Left lung (tissue), 14 donors: ENCODE measurements at regions of chr15 and their contacts with region 1.

Region 1: DNA sequence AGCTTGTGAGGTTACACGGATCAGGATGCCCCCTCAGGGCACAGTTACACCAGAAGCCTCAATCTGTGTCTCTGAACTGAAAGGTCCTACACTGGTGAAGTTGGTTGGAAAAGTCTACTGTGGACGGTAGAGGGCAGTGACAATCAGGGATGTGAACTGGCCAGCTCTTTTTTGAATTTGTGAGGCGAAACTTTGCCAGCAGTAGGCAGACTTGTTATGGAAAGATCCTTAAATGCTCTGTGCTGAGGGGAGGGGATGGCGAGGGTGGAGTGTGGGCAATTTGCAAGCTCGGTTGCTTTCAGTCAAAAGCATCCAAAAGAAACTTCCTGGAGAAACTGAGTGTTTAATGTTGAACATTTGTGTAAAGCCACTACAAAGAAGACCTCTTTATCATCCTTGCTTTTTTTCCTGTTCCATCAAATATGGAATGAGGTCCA is 127.4 kb upstream of the ABHD17C start:
- DNase-seq: peak in 2 of 4 donors; percentile 57 to 83
- ATAC-seq: peak; percentile 92
- H3K4me3 ChIP-seq: no peak overlapping the region
- H3K27ac ChIP-seq: no peak overlapping the region
- H3K4me1 ChIP-seq: peaks cover 7% of the 10 kb centered on the region in 2 donors
- H3K27me3 ChIP-seq: no peaks in the 10 kb centered on the region
- CTCF ChIP-seq: peak; percentile 57 to 69

Region 2: DNA sequence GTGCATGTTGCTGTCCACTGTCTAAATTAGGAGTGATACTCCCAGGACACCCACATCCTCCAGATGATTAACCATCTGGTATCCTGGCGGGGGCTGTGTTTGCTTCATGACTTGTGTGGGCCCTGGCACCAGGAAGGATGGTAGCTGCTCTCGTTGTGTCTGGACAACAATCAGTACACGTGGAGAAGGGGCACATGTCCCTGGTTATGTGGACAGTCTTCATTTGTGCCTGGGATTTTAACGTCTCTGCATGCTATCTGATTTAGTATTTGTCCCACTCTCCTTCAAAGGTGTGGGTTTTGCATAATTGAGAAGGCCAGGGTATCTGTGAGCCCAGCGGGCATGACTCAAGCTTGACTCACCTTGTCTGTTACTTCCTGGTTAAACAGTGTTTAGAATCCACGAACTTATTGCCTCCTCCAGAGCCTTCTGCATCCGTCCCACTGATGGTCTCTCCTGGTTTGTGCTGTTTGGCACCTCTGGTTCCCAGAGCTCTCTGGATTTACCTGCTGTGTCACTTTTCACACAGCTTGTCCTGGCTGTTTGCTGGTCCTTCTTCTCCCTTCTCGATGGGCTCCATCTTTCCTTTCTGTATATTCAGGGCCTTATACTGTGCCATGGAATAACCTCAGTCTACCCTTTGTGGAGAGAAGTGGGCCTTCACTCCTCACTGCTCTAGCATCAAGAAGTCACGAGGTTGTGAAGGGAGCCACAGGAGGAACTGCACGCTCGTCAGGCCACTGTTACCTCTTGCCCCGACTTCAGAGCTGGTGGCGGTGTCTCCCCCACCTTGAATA is 131.0 kb before region 1 on chr15:
- intact Hi-C with region 1: no loop called
- DNase-seq: no peak
- ATAC-seq: peak; percentile 71
- H3K4me3 ChIP-seq: no peak overlapping the region
- H3K27ac ChIP-seq: no peak overlapping the region
- H3K4me1 ChIP-seq: peaks cover 0 to 9% of the 10 kb centered on the region in 2 donors
- H3K27me3 ChIP-seq: peaks cover 0 to 3% of the 10 kb centered on the region in 2 donors
- CTCF ChIP-seq: no peak

Region 3: DNA sequence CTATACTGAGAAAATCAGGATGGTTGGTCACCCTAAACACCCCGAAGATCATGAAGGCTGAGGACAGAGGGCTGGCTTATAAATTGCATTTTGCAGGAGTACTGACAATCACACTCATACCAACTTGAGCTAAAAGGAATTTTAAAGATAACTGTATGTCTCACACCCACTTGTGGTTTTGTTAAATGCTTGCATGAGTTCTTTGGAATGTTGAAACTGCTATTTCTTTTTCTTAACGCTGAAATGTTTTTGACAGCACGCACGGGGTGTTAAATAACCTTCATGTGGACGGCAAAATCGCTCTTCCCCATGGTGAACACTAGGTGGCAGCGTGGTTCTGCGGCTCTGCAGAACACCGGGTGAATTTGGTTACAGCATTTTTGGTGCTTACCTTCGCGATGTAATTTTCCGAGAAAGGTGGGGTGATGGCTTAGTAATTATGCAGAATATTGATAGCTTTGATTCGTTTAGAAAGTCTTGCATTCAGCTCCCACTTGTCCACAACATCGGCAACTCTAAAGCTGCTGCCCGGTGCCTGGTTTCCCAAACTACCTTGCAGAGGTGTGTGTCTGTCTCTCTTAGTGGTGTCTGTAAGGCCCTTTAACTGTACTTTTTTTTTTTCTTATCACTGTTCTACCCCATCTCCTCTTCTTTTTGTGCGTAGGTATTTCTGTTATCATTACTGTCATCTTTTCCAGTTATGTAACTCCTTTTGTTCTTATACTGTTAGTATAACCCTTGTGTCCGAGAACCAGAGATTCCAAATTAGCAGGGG is 111.9 kb before region 1 on chr15:
- intact Hi-C with region 1: loop called in 1 of 2 experiments (anchors 10 kb)
- DNase-seq: peak in 3 of 4 donors; percentile 53 to 84 (median 72)
- ATAC-seq: peak; percentile 93
- H3K4me3 ChIP-seq: no peak overlapping the region
- H3K27ac ChIP-seq: no peak overlapping the region
- H3K4me1 ChIP-seq: peaks cover 9 to 27% of the 10 kb centered on the region in 2 donors
- H3K27me3 ChIP-seq: peaks cover 0 to 8% of the 10 kb centered on the region in 2 donors
- CTCF ChIP-seq: peak; percentile 86 to 88

Region 4: DNA sequence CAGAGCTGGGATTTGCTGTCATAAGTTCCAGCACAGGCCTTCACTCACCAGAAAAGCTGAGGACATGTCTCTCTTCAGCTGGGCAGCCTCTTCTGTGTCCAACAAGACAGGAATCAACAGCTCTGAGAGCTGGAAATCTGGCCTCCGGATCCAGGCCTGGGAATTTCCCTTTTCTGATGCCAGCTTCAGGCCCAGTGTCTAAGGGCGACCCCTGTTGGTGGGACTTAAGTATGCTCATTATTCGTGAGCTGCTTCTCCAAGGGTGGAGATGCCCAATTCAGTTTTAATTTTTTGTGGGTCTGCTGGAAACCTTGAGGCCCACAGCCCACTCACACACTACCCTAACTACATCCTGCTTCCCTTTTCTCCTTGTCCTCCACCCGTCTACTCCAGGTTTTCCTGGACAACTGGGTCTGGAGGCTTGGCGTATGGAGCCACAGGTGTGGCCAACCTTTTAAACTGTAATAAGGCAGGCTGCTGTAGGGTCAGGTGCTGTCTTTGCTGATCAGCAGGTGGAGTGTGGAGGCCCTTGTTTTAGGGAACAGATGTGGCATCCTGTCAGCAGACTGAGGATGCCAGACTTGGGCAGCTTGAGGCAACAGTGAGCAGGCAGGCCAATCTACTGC is 208.8 kb after region 1 on chr15:
- intact Hi-C with region 1: loop called in 1 of 2 experiments (anchors 5 kb)
- DNase-seq: peak in 3 of 4 donors; percentile 65 to 87 (median 73)
- ATAC-seq: peak; percentile 63
- H3K4me3 ChIP-seq: no peak overlapping the region
- H3K27ac ChIP-seq: peak overlapping the region; percentile 33 to 75
- H3K4me1 ChIP-seq: peaks cover 19 to 46% of the 10 kb centered on the region in 2 donors
- H3K27me3 ChIP-seq: peaks cover 12 to 45% of the 10 kb centered on the region in 2 donors
- CTCF ChIP-seq: peak; percentile 67 to 83

Region 5: DNA sequence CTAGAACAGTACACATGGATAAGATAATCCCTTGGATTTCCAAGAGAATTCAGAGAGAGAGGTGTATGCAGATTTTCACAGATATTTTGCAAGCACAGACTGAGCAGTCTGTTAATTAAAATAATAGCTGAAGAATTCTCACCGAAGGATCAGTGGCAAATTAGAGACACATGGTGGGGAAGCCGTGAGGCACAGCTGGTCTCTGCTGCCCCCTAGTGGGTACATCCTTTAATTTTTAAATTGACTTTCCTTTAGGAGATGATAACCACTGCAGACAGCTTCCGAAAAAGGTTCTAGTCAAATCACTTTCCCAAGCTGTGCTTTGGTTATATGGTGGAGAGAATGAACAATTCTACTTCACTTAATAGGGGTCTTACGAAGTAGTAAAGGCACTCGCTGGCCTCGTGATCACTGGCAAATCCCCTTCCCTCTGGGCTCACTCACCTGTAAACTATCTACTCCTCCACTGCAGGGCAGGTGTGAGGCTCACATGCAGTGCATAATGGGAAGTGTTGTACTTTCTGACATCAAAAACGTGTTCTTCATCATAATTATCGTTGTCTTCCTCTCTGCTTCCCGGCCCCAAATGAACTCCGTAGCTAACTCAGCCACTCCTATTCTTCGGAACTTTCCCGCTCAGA is 402.4 kb after region 1 on chr15:
- intact Hi-C with region 1: loop called in 1 of 2 experiments (anchors 5 kb)
- DNase-seq: peak in 2 of 4 donors; percentile 53 to 74
- ATAC-seq: peak; percentile 94
- H3K4me3 ChIP-seq: no peak overlapping the region
- H3K27ac ChIP-seq: no peak overlapping the region
- H3K4me1 ChIP-seq: no peaks in the 10 kb centered on the region
- H3K27me3 ChIP-seq: no peaks in the 10 kb centered on the region
- CTCF ChIP-seq: peak; percentile 63 to 93